Activated naive CD4-positive, alpha-beta T cell treated with anti-CD3 and anti-CD28 coated beads for 36 hours (primary cell): ENCODE measurements at regions of chr9 and their contacts with region 1.

Region 1: GRCh38 chr9:21031091-21031807 is at the start of gene HACD4:
- DNase-seq: peak; percentile 78
- H3K4me3 Mint-ChIP-seq: peak within 1 kb of the TSS; percentile 49
- H3K27ac Mint-ChIP-seq: peak within 1 kb of the TSS; percentile 69
- H3K4me1 Mint-ChIP-seq: peaks cover 25% of the 10 kb centered on the region
- H3K27me3 Mint-ChIP-seq: no peaks in the 10 kb centered on the region
- total RNA-seq, gene HACD4: 1.1 to 1.6 TPM

Region 2: GRCh38 chr9:19517202-19517942 is 1513.9 kb before region 1 on chr9:
- CTCF ChIA-PET with region 1: no interaction called
- intact Hi-C with region 1: loop called (anchors 2 kb)
- DNase-seq: peak; percentile 21
- H3K4me3 Mint-ChIP-seq: no peak overlapping the region
- H3K27ac Mint-ChIP-seq: peak overlapping the region; percentile 15
- H3K4me1 Mint-ChIP-seq: peaks cover 31% of the 10 kb centered on the region
- H3K27me3 Mint-ChIP-seq: peaks cover 11% of the 10 kb centered on the region

Region 3: GRCh38 chr9:20508242-20508641 is 523.0 kb before region 1 on chr9:
- CTCF ChIA-PET with region 1: no interaction called
- intact Hi-C with region 1: loop called (anchors 10 kb)
- DNase-seq: no peak
- H3K4me3 Mint-ChIP-seq: peak overlapping the region; percentile 40
- H3K27ac Mint-ChIP-seq: peak overlapping the region; percentile 13
- H3K4me1 Mint-ChIP-seq: peaks cover 80% of the 10 kb centered on the region
- H3K27me3 Mint-ChIP-seq: no peaks in the 10 kb centered on the region

Region 4: GRCh38 chr9:20713172-20713571 is 318.1 kb before region 1 on chr9:
- CTCF ChIA-PET with region 1: no interaction called
- intact Hi-C with region 1: no loop called
- DNase-seq: no peak
- H3K4me3 Mint-ChIP-seq: no peak overlapping the region
- H3K27ac Mint-ChIP-seq: no peak overlapping the region
- H3K4me1 Mint-ChIP-seq: peaks cover 5% of the 10 kb centered on the region
- H3K27me3 Mint-ChIP-seq: no peaks in the 10 kb centered on the region

Region 5: GRCh38 chr9:20997503-20998076 is 33.7 kb before region 1 on chr9:
- CTCF ChIA-PET with region 1: no interaction called
- intact Hi-C with region 1: loop called (anchors 1 kb)
- DNase-seq: no peak
- H3K4me3 Mint-ChIP-seq: no peak overlapping the region
- H3K27ac Mint-ChIP-seq: peak overlapping the region; percentile 32
- H3K4me1 Mint-ChIP-seq: peaks cover 49% of the 10 kb centered on the region
- H3K27me3 Mint-ChIP-seq: no peaks in the 10 kb centered on the region

Region 6: DNA sequence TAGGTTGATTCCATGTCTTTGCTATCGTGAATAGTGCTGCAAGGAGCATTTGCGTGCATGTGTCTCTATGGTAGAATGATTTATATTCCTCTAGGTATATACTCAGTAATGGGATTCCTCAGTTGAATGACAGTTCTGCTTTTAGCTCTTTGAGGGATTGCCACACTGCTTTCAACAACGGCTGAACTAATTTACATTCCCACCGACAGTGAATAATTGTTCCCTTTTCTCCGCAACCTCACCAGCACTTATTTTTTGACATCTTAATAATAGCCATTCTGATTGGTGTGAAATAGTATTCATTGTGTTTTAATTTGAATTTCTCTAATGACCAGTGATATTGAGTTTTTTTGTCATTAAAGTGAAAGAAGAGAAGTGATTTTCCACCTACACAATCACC is 255.4 kb after region 1 on chr9:
- CTCF ChIA-PET with region 1: no interaction called
- intact Hi-C with region 1: no loop called
- DNase-seq: no peak
- H3K4me3 Mint-ChIP-seq: no peak overlapping the region
- H3K27ac Mint-ChIP-seq: no peak overlapping the region
- H3K4me1 Mint-ChIP-seq: no peaks in the 10 kb centered on the region
- H3K27me3 Mint-ChIP-seq: peaks cover 11% of the 10 kb centered on the region

Region 7: DNA sequence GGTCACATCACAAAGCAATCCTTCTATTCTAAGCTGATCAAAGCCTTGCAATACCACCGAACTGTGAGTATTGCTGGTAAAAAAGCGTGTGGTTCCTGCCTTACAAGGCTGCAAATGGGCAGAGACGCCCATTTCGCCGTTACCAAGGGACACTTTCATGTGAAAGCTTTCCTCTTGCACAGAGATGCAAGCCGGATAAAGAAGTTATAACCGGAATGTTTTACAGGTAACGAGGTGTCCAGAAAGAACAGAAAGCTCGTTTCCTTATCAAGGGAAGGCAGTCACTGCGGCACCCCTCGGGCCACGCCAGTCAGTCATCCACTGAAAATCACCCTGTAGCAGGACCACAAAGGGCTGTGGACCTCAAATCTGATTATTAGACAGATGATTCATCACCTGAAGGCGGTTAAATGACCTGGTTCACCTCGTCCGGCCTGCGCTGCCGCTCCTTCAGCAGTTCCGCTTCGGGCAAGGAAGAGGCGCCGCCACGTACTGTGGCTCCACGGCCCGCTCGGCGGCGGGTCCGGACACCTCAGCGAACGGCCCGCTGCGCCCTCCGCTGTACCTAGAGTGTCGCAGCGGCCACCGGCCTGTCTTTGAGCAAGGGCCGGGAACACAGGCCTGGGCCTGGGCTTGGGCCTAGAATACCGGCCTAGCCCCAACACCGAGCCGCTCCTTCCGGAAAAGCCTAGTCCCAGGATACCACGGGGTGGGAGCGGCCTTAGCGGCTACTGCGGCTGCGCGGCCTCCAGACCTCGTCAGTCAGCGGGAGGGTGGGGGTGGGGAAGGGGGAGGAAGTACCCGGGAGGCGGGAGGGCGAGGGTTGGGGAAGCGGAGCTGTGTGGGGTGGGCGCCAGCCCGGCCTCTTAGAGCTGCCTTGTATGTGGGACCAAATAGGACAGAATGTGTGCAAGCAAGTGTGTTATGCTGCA is 303.7 kb after region 1 on chr9 and contains the start of gene KLHL9:
- CTCF ChIA-PET with region 1: no interaction called
- intact Hi-C with region 1: loop called (anchors 5 kb)
- DNase-seq: peak; percentile 93
- H3K4me3 Mint-ChIP-seq: peak within 1 kb of the TSS; percentile 84
- H3K27ac Mint-ChIP-seq: peak within 1 kb of the TSS; percentile 91
- H3K4me1 Mint-ChIP-seq: peaks cover 48% of the 10 kb centered on the region
- H3K27me3 Mint-ChIP-seq: no peaks in the 10 kb centered on the region
- total RNA-seq, gene KLHL9: 17.5 to 18.3 TPM

Region 8: GRCh38 chr9:22008736-22009562 is 977.7 kb after region 1 on chr9 and contains the start of gene CDKN2B:
- CTCF ChIA-PET with region 1: no interaction called
- intact Hi-C with region 1: loop called (anchors 10 kb)
- DNase-seq: peak; percentile 63
- H3K4me3 Mint-ChIP-seq: peak within 1 kb of the TSS; percentile 74
- H3K27ac Mint-ChIP-seq: no peak within 1 kb of the TSS
- H3K4me1 Mint-ChIP-seq: peaks cover 18% of the 10 kb centered on the region
- H3K27me3 Mint-ChIP-seq: peaks cover 62% of the 10 kb centered on the region
- total RNA-seq, gene CDKN2B: not detected